Dorsolateral prefrontal cortex (tissue), 120 donors: ENCODE measurements at regions of chr4 and their contacts with region 1.

Region 1: DNA sequence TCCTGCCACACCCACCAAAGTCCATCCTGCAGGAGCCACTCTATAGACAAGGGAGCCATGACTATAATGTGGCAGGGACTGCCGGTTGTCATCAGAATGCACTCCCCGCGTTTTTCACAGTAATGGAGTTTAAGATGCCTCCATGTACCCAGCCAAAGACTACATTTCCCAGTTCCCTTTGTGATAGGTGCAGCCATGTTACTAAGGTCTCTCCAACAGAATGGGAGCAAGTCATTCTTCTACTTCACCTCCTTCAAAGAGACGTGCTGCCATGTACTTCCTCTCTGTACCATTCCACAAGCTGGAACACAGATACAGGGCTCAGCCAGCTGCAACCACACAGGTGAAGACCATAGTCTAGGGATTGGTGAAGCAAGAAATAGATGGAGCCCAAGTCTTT is 126.7 kb downstream of the CORIN start:
- DNase-seq: no peak
- H3K4me3 ChIP-seq: no peak overlapping the region
- H3K27ac ChIP-seq: no peak overlapping the region
- H3K27me3 ChIP-seq: peaks cover 0 to 17% (median 0%) of the 10 kb centered on the region in 45 donors
- CTCF ChIP-seq: no peak

Region 2: DNA sequence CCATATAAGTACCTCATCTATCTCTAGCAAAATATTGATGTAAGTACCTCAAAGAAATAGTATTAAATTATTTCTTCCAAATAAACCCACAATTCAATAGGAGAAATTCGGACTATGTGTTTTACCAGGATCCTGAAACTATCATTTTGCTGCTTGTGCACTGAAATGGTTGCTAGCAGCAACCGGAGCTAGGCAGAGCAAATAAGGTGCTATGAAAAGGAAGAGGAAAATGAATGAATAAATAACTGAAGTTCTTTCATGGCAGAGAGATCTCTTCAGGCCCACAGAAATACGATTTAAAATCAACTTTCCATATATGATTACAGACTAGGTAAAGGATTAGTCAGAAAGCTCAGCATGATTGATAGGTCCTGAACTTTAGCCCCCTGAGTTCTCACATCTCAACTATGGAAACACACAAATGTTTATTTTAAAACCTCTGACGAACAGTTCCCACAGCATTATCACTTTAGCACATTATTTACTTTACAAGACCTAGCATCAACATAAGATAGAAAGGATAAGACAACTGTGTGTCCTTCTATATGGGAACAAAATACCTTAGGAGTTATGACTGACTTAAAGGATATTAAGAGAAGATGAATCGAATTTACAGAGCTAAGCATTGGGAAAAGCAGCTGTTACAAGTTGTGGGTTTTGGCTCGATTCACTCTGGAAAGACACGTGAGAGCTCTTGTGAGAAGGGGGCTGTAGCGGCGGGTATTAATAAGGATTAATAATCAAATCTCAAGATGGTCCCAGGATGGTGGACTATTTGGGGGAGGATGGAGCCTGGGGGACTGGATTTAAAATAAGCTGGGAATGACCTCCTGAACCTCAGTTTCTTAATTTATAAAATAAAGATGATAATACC is 22.4 kb after region 1 on chr4:
- intact Hi-C with region 1: loop called in 1 of 2 experiments (anchors 1 kb)
- DNase-seq: no peak
- H3K4me3 ChIP-seq: no peak overlapping the region
- H3K27ac ChIP-seq: no peak overlapping the region
- H3K27me3 ChIP-seq: peaks cover 0 to 2% (median 0%) of the 10 kb centered on the region in 45 donors
- CTCF ChIP-seq: no peak

Region 3: DNA sequence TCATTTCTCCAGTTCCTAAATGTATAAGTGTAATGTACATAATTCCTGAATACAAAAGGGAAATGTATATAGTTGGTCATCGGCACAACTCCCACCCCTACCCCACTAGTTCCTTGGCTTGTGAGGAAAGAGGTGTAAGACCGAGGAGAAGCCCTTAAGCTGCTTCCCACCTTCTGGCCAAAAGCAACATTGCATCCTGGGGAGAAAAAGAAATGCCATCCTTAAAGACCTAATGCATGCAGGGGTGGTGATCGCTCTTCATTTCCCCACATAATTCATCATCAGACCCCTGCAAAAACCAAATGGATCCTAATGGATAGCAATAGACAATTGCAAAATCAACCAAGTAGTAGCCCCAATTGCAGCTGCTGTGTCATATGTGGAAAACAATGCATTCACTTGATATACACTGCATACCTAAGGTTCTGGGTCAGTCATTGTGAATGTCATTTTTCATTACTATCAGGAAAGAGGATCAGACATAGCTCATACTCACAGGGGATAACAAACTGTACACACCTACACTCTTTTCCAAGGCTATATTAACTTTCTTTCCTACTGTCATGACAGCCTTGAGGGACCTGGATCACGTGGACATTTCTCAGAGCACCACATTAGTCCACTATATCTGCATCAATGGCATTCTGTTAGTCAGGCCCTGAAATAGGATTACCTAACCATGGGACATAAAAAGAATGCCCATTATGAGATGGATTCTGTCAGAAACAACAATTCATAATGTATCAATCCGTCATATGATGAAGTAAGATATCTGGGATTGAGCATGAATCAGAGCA is 234.9 kb after region 1 on chr4:
- intact Hi-C with region 1: no loop called
- DNase-seq: no peak
- H3K4me3 ChIP-seq: no peak overlapping the region
- H3K27ac ChIP-seq: no peak overlapping the region
- H3K27me3 ChIP-seq: peaks cover 0 to 4% (median 0%) of the 10 kb centered on the region in 45 donors
- CTCF ChIP-seq: no peak